ENCODE measurements at regions of chr10 and their contacts with region 1.

Region 1: GRCh38 chr10:109922976-109923921 is at the start of gene XPNPEP1:
- DNase-seq: peak; percentile 75
- H3K4me3 Mint-ChIP-seq: peak within 1 kb of the TSS; percentile 91
- H3K27ac Mint-ChIP-seq: peak within 1 kb of the TSS; percentile 90
- H3K4me1 Mint-ChIP-seq: peaks cover 41% of the 10 kb centered on the region
- H3K27me3 Mint-ChIP-seq: peaks cover 7% of the 10 kb centered on the region
- total RNA-seq, gene XPNPEP1: 79.4 and 88.2 TPM in 2 replicates

Region 2: DNA sequence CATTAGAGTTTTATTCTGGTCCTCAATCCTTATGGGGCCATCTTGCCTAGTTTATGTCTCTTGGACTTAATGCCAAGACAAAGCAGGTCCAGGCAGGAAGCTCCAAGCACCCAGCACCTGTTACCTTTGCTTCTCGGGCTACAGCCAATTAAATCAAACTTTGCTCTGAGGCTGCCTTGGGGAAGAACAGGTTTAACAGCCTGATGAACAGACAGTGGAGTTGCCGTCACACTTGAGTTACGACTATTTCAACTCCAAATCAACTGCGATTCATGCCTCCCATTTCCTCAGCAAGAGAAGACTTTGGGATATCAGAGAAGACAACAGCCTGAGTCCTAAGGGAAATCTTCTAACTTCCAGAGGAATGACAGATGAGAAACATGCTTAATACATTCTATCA is 62.2 kb before region 1 on chr10:
- intact Hi-C with region 1: no loop called
- DNase-seq: no peak
- H3K4me3 Mint-ChIP-seq: no peak overlapping the region
- H3K27ac Mint-ChIP-seq: no peak overlapping the region
- H3K4me1 Mint-ChIP-seq: peaks cover 10% of the 10 kb centered on the region
- H3K27me3 Mint-ChIP-seq: no peaks in the 10 kb centered on the region

Region 3: GRCh38 chr10:109883859-109884771 is 39.1 kb before region 1 on chr10:
- intact Hi-C with region 1: loop called (anchors 1 kb)
- DNase-seq: peak; percentile 43
- H3K4me3 Mint-ChIP-seq: no peak overlapping the region
- H3K27ac Mint-ChIP-seq: no peak overlapping the region
- H3K4me1 Mint-ChIP-seq: peaks cover 10% of the 10 kb centered on the region
- H3K27me3 Mint-ChIP-seq: no peaks in the 10 kb centered on the region

Region 4: DNA sequence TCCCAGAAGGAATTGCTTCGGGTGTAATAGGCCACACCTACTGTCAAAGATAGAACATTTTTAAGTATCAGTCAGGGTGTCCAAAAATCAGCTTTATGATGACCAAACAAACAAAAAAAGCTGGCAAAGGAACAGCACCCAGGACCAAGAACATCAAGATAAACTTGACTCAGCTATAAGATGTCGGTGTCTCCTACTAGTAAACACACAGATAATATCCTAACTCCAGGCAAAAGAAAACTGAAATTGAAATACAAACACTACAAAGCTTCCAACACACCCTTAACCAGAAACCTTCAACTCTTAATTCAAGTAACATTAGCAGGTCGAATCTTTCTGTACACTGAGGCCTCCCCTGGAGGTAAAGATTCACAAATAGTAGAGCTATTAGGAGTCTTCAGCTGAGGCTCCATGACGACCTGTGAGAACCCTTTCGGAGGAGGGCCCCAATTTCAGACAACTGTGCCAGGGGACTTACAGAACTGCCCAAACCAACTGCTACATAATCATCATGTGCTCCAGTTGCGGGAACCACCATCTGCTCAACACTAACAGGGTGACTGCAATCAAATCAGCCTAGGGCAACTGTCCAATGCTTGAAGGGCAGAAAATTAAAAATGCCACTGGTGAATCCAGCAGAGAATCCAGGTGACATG is 20.2 kb before region 1 on chr10:
- intact Hi-C with region 1: loop called (anchors 1 kb)
- DNase-seq: no peak
- H3K4me3 Mint-ChIP-seq: peak overlapping the region; percentile 17
- H3K27ac Mint-ChIP-seq: peak overlapping the region; percentile 67
- H3K4me1 Mint-ChIP-seq: peaks cover 42% of the 10 kb centered on the region
- H3K27me3 Mint-ChIP-seq: no peaks in the 10 kb centered on the region

Region 5: GRCh38 chr10:110067960-110068770 is 144.9 kb after region 1 on chr10:
- intact Hi-C with region 1: loop called (anchors 5 kb)
- DNase-seq: peak; percentile 70
- H3K4me3 Mint-ChIP-seq: peak overlapping the region; percentile 76
- H3K27ac Mint-ChIP-seq: peak overlapping the region; percentile 95
- H3K4me1 Mint-ChIP-seq: peaks cover 69% of the 10 kb centered on the region
- H3K27me3 Mint-ChIP-seq: no peaks in the 10 kb centered on the region

Region 6: DNA sequence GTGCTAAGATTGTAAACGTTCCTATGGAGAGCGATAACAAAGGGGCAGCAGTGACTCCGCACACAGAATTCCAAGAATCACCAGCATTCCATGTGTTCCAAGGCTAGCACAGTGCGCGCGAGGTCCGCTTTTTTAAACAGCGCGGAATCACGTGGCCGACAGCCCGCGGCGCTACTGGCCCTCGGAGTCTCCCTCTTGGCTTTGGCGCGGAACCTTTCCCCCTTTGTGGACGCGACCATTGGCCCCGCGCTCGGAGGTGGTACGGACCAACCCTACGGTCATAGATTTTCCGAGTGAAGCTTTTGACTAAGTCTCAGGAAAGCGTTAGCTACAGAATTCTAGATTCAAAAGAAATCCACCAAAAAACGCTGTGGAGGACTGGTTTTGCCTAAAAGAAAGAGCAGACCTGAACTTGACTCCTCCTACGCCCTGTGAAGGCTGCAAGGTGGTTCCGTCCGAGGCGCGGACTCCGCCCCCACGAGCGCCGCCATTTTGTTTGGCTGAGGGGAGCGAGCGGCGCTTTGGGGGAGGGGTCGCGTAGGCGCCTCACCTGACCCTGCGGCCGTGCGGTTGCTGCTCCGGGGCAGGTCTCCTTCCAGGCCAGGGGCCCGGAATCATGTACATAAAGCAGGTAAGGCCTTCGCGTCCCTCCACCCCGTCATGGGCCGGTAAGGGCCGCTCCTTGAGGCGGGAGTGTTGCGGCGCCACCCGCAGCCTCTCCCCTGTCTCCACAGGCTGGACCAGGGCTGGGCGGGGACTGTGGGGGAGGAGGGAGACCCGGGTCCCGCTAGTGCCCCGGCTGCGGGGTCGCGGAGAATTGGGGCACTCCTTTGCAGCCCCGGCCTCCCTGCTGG is 644.2 kb after region 1 on chr10 and contains the start of gene SMC3:
- intact Hi-C with region 1: loop called (anchors 10 kb)
- DNase-seq: peak; percentile 90
- H3K4me3 Mint-ChIP-seq: peak within 1 kb of the TSS; percentile 90
- H3K27ac Mint-ChIP-seq: peak within 1 kb of the TSS; percentile 98
- H3K4me1 Mint-ChIP-seq: peaks cover 51% of the 10 kb centered on the region
- H3K27me3 Mint-ChIP-seq: peaks cover 9% of the 10 kb centered on the region
- total RNA-seq, gene SMC3: 78.4 and 78.8 TPM in 2 replicates

Measured in activated T-helper 2 cell treated with anti-CD3 and anti-CD28 coated beads, Interferon-gamma antibody, Interleukin-2, Interleukin-4, amounts not matched to agents 10 μg/mL and 5 μg/mL and 100 μg/mL, durations not matched to agents 14 hours and 24 hours and 36 hours (primary cell).